Calu3 (cell line): ENCODE measurements at regions of chr12 and their contacts with region 1.

Region 1: GRCh38 chr12:42961395-42961794 is 371.8 kb upstream of the PRICKLE1 start:
- DNase-seq: peak; percentile 66
- H3K4me3 Mint-ChIP-seq: no peak overlapping the region
- H3K27ac Mint-ChIP-seq: peak overlapping the region; percentile 67
- H3K4me1 Mint-ChIP-seq: peaks cover 49% of the 10 kb centered on the region
- H3K27me3 Mint-ChIP-seq: no peaks in the 10 kb centered on the region
- CTCF ChIP-seq: no peak

Region 2: DNA sequence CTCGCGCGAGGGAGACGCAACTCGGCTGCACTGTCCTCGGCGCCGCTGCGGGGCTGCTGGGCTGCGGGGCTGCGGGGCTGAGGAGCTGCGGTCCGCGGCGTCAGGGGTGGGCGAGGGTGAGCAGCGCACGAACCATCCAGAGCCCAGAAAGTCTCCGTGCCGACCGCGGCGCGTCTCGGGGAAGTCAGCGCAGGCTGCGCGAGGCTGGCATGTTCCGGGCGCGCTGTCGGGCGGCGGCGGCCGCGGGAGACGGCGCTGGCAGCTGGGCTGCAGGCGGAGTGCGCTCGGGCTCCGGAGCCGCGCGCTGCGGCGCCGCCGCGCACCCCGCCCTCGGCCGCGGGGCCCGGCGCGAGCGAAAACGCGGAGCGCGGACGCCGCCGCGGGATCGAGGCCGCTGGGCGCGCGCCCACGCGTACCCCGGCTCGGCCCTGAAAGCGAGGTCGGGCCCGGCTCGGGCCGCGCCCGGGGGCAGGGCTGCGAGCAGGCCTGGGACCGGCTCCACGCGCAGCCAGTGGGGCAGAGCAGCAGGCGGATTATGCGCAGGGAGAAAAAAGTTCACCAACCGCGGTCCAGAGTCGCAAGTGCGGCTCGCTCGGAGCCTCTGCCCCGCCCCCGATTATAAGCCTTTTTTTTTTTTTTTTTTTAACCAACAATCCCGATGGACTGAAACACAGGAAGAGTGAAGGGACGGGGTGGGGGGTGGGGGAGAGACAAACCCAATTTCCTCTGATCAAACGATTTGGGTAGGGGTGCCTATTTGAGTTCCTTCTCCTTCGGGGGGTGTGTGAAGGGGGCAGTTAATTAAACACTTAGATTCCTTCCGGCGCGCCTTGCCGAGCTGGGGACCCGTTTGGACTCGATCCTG is 371.7 kb before region 1 on chr12 and contains the start of gene PRICKLE1:
- CTCF ChIA-PET with region 1: no interaction called
- intact Hi-C with region 1: loop called (anchors 10 kb)
- DNase-seq: peak; percentile 48
- H3K4me3 Mint-ChIP-seq: peak within 1 kb of the TSS; percentile 81
- H3K27ac Mint-ChIP-seq: peak within 1 kb of the TSS; percentile 36
- H3K4me1 Mint-ChIP-seq: peaks cover 15% of the 10 kb centered on the region
- H3K27me3 Mint-ChIP-seq: no peaks in the 10 kb centered on the region
- CTCF ChIP-seq: no peak
- total RNA-seq, gene PRICKLE1: 7.0 and 12.7 TPM in 2 replicates

Region 3: GRCh38 chr12:42790761-42791151 is 170.6 kb before region 1 on chr12:
- CTCF ChIA-PET with region 1: no interaction called
- intact Hi-C with region 1: loop called (anchors 2 kb)
- DNase-seq: peak; percentile 56
- H3K4me3 Mint-ChIP-seq: no peak overlapping the region
- H3K27ac Mint-ChIP-seq: peak overlapping the region; percentile 63
- H3K4me1 Mint-ChIP-seq: peaks cover 29% of the 10 kb centered on the region
- H3K27me3 Mint-ChIP-seq: no peaks in the 10 kb centered on the region
- CTCF ChIP-seq: no peak

Region 4: GRCh38 chr12:42918443-42918842 is 43.0 kb before region 1 on chr12:
- CTCF ChIA-PET with region 1: interaction called, 4 read pairs
- intact Hi-C with region 1: loop called (anchors 2 kb)
- DNase-seq: no peak
- H3K4me3 Mint-ChIP-seq: no peak overlapping the region
- H3K27ac Mint-ChIP-seq: no peak overlapping the region
- H3K4me1 Mint-ChIP-seq: peaks cover 46% of the 10 kb centered on the region
- H3K27me3 Mint-ChIP-seq: no peaks in the 10 kb centered on the region
- CTCF ChIP-seq: no peak

Region 5: GRCh38 chr12:43282106-43282505 is 320.7 kb after region 1 on chr12:
- CTCF ChIA-PET with region 1: no interaction called
- intact Hi-C with region 1: loop called (anchors 5 kb)
- DNase-seq: no peak
- H3K4me3 Mint-ChIP-seq: no peak overlapping the region
- H3K27ac Mint-ChIP-seq: no peak overlapping the region
- H3K4me1 Mint-ChIP-seq: peaks cover 23% of the 10 kb centered on the region
- H3K27me3 Mint-ChIP-seq: no peaks in the 10 kb centered on the region
- CTCF ChIP-seq: no peak